ENCODE measurements at regions of chr17 and their contacts with region 1.

Region 1: GRCh38 chr17:44324571-44325275 is at the start of gene SLC25A39:
- DNase-seq: no peak
- H3K4me3 ChIP-seq: peak within 1 kb of the TSS; percentile 91 to 97
- H3K27ac ChIP-seq: peak within 1 kb of the TSS; percentile 96
- H3K4me1 ChIP-seq: peaks cover 32% of the 10 kb centered on the region
- H3K27me3 ChIP-seq: no peaks in the 10 kb centered on the region
- CTCF ChIP-seq: peak in 2 of 3 experiments; percentile 2 to 15
- POLR2A ChIP-seq: peak in 1 of 2 donors; percentile 74
- total RNA-seq, gene SLC25A39: 93.1 TPM

Region 2: DNA sequence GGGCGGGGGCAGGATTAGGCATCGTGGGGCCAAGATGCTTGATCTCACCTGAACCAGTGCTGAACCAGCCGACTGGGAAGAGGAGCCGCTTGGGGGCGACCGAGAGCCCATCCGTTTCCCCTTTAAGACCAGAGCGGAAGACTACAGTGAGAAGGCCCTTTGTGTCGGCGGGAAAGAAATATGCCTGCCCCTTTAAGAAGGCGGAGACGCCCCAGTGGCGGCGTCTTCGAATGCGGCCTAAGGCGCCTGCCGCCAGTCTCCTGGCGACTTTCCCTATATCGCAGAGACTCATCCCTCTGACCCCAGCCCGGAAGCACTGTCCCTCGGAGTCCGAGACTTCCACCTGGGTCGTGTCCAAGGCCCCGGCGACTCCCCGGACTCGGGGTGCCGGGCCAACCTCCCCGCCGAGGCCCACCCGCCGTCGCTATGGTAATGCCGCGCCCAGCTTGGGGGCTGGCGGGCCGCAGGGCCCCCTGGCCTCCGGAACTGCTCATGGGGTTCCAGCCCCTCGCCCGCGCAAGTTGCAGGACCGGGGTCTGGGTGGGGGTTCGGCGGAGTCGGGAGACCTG is 182.9 kb before region 1 on chr17 and contains the start of gene HROB:
- intact Hi-C with region 1: no loop called
- DNase-seq: peak in 1 of 2 donors; percentile 93
- H3K4me3 ChIP-seq: peak within 1 kb of the TSS; percentile 67 to 77
- H3K27ac ChIP-seq: peak within 1 kb of the TSS; percentile 73
- H3K4me1 ChIP-seq: peaks cover 24% of the 10 kb centered on the region
- H3K27me3 ChIP-seq: no peaks in the 10 kb centered on the region
- CTCF ChIP-seq: peak; percentile 82 to 86 (median 85)
- POLR2A ChIP-seq: no peak
- total RNA-seq, gene HROB: 2.0 TPM

Region 3: DNA sequence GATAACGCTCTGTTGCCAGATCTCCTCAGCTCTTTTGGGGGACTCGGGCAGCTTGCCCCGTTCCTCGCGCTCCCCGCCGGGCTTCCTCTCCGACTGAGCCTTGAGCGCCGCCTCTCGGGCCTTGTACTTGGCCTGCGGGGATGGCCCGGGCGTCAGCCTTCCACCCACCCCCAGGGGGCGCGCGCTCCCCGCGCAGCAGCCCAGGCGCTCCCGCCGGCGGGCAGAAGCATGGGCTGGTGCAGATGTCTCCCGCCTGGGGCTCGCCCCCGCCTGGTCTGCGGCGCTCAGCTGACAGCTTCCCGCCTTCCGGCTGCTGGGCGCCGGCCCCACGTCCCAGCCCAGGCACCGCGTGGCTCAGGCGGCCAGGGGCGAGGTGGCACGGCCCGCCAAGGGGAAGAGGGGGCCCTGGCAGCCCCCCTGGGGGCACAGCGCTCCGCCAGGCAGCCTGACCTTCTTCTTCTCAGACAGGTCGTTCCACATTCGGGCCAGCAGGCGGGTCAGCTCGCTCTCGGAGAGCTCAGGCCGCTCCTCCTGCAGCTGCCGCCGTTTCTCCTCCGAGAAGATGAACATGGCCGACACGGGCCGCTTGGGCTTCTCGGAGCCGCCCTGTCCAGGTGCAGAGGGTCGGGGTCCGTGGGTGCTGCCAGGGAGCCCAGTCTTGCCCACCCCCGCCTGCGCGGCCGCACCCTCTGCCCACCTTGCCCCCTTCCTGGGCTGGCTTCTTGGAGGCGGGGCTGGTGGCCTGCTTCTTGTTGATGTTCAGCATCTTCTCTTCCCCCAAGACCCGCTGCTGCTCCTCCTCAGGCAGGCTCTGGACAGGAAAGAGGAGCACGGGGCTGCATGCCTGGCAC is 114.2 kb before region 1 on chr17:
- intact Hi-C with region 1: loop called (anchors 5 kb)
- DNase-seq: no peak
- H3K4me3 ChIP-seq: peak overlapping the region in 1 of 2 donors; percentile 17
- H3K27ac ChIP-seq: peak overlapping the region; percentile 66
- H3K4me1 ChIP-seq: peaks cover 27% of the 10 kb centered on the region
- H3K27me3 ChIP-seq: no peaks in the 10 kb centered on the region
- CTCF ChIP-seq: peak; percentile 96 to 98 (median 98)
- POLR2A ChIP-seq: no peak

Region 4: DNA sequence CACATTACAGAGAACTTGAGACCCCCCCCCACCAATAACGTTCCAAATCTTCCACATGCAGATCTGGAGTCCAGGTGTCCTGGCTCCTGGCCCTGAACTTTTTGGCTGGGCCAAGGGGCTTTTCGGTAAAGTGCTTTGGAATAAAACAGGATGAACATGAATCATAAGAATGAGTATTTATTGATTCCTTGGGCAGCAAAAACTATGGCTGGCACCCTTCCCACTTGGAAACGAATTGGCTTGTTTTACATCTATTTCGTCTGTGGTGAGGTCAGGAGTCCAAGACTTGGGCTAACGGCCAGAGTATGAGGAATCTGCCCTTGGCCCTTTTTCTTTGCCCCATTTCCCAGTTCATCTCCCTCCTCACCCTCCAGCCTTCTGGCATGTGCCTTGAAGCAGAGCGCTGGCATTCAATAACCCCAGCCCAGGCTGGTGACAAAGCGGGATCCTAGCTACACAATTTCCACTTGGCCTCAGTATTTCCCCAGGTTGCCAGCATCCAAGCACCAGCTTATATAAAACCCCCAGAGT is 101.1 kb before region 1 on chr17:
- intact Hi-C with region 1: loop called (anchors 1 kb)
- DNase-seq: no peak
- H3K4me3 ChIP-seq: no peak overlapping the region
- H3K27ac ChIP-seq: no peak overlapping the region
- H3K4me1 ChIP-seq: peaks cover 23% of the 10 kb centered on the region
- H3K27me3 ChIP-seq: no peaks in the 10 kb centered on the region
- CTCF ChIP-seq: no peak
- POLR2A ChIP-seq: no peak

Region 5: DNA sequence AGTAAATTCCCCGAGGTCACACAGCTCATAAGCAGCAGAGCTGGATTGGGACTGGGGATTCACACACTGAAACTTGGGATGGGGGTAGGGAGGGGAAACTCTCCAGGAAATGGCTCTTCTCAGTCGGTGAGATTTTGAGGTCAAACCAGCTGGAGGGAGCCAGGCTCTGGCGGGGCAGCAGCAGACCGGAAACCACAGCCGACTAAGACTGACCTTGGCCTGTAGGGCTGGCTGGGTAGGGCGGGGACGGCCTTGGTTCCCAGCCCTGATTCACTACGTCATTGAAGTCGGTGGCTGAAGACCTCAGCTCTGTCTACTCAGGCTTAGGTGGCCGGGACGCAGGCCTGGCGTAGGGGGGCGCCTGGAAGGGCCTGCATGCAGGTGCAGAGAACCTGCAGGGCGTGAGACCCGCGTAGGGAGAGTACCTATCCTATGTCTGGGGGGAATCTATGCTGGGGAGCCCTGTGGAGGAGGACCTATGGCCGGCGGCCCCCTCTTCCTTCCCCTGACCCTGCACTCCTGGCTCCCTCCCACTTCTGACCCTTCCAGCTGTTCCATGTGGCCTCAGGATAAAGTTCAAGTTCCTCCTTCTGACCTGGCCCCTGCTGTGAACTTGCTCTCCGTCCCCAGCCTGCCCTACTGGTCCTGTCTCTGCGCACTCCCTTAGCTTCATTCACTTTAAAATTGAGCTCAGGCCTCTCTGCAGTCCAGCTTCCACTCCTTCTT is 44.9 kb before region 1 on chr17:
- intact Hi-C with region 1: no loop called
- DNase-seq: no peak
- H3K4me3 ChIP-seq: no peak overlapping the region
- H3K27ac ChIP-seq: no peak overlapping the region
- H3K4me1 ChIP-seq: no peaks in the 10 kb centered on the region
- H3K27me3 ChIP-seq: no peaks in the 10 kb centered on the region
- CTCF ChIP-seq: no peak
- POLR2A ChIP-seq: no peak